ENCODE measurements at regions of chr4 and their contacts with region 1.

Region 1: GRCh38 chr4:83261307-83261706 is 23.3 kb downstream of the COQ2 start:
- DNase-seq: no peak
- H3K4me3 ChIP-seq: no peak overlapping the region
- H3K27ac ChIP-seq: no peak overlapping the region
- H3K4me1 ChIP-seq: peaks cover 17% of the 10 kb centered on the region
- H3K27me3 ChIP-seq: no peaks in the 10 kb centered on the region
- CTCF ChIP-seq: no peak

Region 2: GRCh38 chr4:82721819-82722423 is 539.4 kb before region 1 on chr4:
- CTCF ChIA-PET with region 1: no interaction called
- POLR2A ChIA-PET with region 1: no interaction called
- intact Hi-C with region 1: no loop called
- DNase-seq: peak in 1 of 2 experiments; percentile 18
- H3K4me3 ChIP-seq: no peak overlapping the region
- H3K27ac ChIP-seq: no peak overlapping the region
- H3K4me1 ChIP-seq: no peaks in the 10 kb centered on the region
- H3K27me3 ChIP-seq: no peaks in the 10 kb centered on the region
- CTCF ChIP-seq: peak; percentile 57

Region 3: DNA sequence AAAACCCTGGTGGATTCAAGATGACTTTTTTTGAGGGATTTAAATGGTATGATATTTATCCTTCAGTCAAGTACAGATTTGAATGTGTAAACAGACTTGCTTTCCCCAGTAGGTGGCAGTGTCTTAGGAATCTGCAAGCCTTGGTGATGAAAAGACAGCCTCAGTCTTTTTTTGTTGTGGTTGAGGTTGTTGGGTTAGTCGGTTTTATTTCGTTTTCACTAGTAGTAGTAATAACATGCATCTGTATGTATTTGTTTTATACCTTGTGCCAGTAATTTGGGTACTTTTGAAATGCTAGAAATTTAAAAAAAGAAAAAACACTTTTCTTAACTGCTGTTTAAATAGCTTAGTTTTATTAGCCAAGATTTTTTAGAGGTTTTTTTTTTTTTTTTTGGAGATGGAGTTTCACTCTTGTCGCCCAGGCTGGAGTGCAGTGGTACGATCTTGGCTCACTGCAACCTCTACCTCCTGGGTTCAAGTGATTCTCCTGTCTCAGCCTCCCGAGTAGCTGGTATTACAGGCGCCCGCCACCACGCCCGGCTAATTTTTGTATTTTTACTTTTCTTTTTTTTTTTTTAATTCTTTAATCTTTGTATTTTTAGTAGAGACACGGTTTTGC is 187.1 kb before region 1 on chr4:
- CTCF ChIA-PET with region 1: interaction called, 8 read pairs
- POLR2A ChIA-PET with region 1: no interaction called
- intact Hi-C with region 1: loop called (anchors 5 kb)
- DNase-seq: peak; percentile 23 to 38
- H3K4me3 ChIP-seq: no peak overlapping the region
- H3K27ac ChIP-seq: no peak overlapping the region
- H3K4me1 ChIP-seq: no peaks in the 10 kb centered on the region
- H3K27me3 ChIP-seq: no peaks in the 10 kb centered on the region
- CTCF ChIP-seq: peak; percentile 67

Region 4: DNA sequence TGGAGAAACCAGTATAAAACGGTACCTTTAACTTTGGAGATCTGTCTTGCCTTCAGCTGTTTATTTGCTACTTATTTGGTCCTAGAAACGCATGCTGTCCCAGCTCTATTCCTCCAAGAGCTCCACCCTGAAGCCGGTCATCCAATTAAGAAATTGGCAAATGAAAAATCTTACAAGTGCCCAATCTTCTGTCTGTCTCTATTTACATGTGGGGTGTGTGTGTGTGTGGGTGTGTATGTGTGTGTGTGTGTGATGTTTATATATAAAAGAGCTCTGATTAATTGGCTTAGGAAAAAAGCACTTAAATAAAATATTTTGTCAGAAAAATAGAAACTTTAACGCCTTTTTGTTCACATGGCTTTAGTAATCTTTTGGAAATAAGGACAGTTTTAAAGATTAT is 164.3 kb before region 1 on chr4:
- CTCF ChIA-PET with region 1: no interaction called
- POLR2A ChIA-PET with region 1: no interaction called
- intact Hi-C with region 1: no loop called
- DNase-seq: no peak
- H3K4me3 ChIP-seq: no peak overlapping the region
- H3K27ac ChIP-seq: no peak overlapping the region
- H3K4me1 ChIP-seq: peaks cover 9% of the 10 kb centered on the region
- H3K27me3 ChIP-seq: no peaks in the 10 kb centered on the region
- CTCF ChIP-seq: no peak

Region 5: GRCh38 chr4:83320548-83320947 is 59.2 kb after region 1 on chr4:
- CTCF ChIA-PET with region 1: no interaction called
- POLR2A ChIA-PET with region 1: no interaction called
- intact Hi-C with region 1: no loop called
- DNase-seq: no peak
- H3K4me3 ChIP-seq: no peak overlapping the region
- H3K27ac ChIP-seq: no peak overlapping the region
- H3K4me1 ChIP-seq: no peaks in the 10 kb centered on the region
- H3K27me3 ChIP-seq: no peaks in the 10 kb centered on the region
- CTCF ChIP-seq: no peak

Measured in PC-9 (cell line).